Caco-2 (cell line): ENCODE measurements at regions of chr11 and their contacts with region 1.

Region 1: GRCh38 chr11:75241036-75241905 is 697 bp downstream of the TPBGL start:
- DNase-seq: peak; percentile 88 to 99
- H3K4me3 ChIP-seq: peak overlapping the region; percentile 47
- H3K4me3 Mint-ChIP-seq: peak overlapping the region; percentile 62
- H3K27ac Mint-ChIP-seq: no peak overlapping the region
- H3K4me1 ChIP-seq: peaks cover 10% of the 10 kb centered on the region; the same call in 1 of the 2 replicates
- H3K4me1 Mint-ChIP-seq: no peaks in the 10 kb centered on the region
- H3K27me3 ChIP-seq: peaks cover 6% of the 10 kb centered on the region
- H3K27me3 Mint-ChIP-seq: peaks cover 30% of the 10 kb centered on the region
- CTCF ChIP-seq: peak; percentile 67 to 99

Region 2: DNA sequence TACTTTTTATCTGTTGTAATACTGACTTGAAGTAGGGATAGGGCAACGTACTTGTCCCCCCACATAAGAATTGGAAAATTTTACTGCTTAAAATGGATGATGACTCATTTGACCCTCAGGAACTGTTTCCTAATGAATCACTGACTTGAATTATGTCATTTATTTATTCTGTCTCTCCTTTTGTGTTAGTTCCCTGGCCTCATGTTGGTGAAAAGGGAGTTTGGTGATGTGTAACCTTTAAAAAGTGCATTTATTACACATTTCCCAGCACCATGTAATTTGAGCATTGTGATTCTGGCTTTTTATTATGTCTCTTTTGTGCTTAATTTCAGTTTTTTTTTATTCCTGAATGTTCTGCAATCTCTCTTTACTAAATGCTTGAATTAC is 822.8 kb before region 1 on chr11:
- CTCF ChIA-PET with region 1: no interaction called
- POLR2A ChIA-PET with region 1: no interaction called
- intact Hi-C with region 1: no loop called
- DNase-seq: no peak
- H3K4me3 ChIP-seq: no peak overlapping the region
- H3K4me3 Mint-ChIP-seq: no peak overlapping the region
- H3K27ac Mint-ChIP-seq: no peak overlapping the region
- H3K4me1 ChIP-seq: peaks cover 22% of the 10 kb centered on the region
- H3K4me1 Mint-ChIP-seq: peaks cover 7% of the 10 kb centered on the region
- H3K27me3 ChIP-seq: no peaks in the 10 kb centered on the region
- H3K27me3 Mint-ChIP-seq: peaks cover 3% of the 10 kb centered on the region
- CTCF ChIP-seq: no peak

Region 3: DNA sequence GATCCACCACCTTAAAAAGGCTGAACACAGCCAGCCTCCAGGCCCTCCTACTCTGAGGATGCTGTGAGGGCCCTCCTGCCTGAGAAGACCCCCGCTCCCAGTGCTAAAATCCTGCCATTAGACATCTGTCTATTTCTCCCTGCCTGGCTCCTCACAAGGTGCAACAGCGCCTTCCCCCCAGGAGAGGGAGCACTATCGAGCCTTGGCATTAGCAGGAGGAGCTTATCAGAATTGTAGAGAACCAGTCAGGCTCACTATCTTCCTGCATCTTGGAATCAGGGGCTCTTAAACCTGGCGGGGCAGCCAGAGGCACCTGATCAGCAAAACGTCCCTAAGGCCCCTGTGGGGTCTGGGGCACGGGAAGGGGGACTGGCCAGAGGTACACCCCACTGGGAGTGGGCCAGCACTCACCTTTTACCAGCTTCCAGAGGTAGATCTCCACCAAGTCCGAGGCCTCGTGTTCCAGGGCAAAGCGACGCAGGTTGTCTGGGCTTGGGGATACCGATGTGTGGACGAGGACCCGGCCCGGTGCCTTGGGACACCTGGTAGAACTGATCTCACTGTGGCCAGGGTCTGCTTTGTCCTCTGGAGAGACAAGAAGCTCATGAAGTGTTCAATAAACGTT is 538.8 kb before region 1 on chr11:
- CTCF ChIA-PET with region 1: no interaction called
- POLR2A ChIA-PET with region 1: no interaction called
- intact Hi-C with region 1: loop called (anchors 10 kb)
- DNase-seq: peak; percentile 85 to 89
- H3K4me3 ChIP-seq: no peak overlapping the region
- H3K4me3 Mint-ChIP-seq: no peak overlapping the region
- H3K27ac Mint-ChIP-seq: no peak overlapping the region
- H3K4me1 ChIP-seq: no peaks in the 10 kb centered on the region
- H3K4me1 Mint-ChIP-seq: no peaks in the 10 kb centered on the region
- H3K27me3 ChIP-seq: no peaks in the 10 kb centered on the region
- H3K27me3 Mint-ChIP-seq: no peaks in the 10 kb centered on the region
- CTCF ChIP-seq: peak; percentile 99 to 100

Region 4: DNA sequence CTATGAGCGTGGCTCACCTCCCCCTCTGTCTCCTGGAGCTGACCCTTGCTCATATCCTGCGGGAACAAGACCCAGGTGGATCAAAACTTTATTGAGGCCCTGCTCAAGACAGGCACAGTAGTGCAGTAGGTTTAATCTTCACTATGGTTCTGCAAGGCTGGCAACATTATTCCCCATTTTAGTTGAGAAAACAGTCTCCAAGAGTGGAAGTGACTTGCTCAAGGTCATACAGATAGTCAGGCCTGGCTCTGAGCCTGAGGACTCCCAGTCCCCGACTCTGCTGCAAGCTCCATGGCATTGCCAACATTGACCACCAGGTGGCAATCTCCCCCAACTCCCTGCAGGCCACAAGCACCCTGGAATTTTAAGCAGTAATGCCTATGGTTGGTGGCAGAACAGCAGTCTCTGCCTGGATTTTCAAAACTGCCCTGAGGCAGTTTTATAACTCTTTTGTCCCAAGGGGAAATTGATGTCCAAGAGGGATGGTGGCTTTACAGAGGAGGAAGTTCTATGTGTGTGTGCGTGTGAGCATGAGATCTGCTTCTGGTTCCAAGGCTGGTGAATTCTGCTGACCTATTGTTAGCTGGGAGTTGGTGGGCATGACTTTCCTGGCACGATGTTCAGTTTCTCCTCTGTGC is 218.4 kb before region 1 on chr11:
- CTCF ChIA-PET with region 1: interaction called, 28 read pairs
- POLR2A ChIA-PET with region 1: no interaction called
- intact Hi-C with region 1: no loop called
- DNase-seq: peak; percentile 89 to 93
- H3K4me3 ChIP-seq: no peak overlapping the region
- H3K4me3 Mint-ChIP-seq: no peak overlapping the region
- H3K27ac Mint-ChIP-seq: no peak overlapping the region
- H3K4me1 ChIP-seq: no peaks in the 10 kb centered on the region
- H3K4me1 Mint-ChIP-seq: no peaks in the 10 kb centered on the region
- H3K27me3 ChIP-seq: no peaks in the 10 kb centered on the region
- H3K27me3 Mint-ChIP-seq: no peaks in the 10 kb centered on the region
- CTCF ChIP-seq: peak; percentile 99 to 100

Region 5: DNA sequence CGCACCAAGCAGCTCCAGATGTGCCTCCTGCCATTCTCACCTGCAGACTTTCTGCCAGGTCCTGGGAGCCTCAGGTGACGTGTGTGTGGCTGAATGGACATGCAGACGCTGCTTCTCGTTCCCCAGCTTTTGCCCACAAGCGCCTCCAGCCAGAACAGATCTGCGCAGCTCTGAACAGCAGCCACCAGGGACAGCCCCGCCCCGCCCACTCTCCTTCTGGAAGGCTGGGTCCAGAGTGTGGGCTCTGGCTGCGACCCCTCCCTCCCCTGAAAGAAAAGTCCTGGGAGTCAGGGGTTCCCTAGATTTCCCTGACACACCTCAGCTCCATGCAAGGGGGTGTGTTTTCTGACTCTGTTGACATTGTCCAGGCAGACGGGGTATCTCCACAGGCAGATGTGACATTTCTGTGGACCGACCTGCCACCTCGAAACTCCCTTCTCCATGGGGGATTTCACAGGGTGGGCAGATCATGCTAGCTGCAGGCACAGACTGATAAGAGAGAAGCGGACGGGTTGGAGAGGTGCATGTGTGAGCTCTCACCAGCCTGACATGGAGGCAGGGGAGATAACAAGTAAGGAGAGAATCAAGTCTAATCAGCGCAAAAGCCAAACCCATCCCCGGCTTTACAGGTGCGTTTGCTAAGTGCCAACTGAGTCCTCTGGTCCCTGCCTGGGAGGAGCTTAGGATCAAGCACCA is 70.6 kb before region 1 on chr11:
- CTCF ChIA-PET with region 1: interaction called, 13 read pairs
- POLR2A ChIA-PET with region 1: no interaction called
- intact Hi-C with region 1: no loop called
- DNase-seq: peak in 1 of 2 experiments; percentile 50
- H3K4me3 ChIP-seq: no peak overlapping the region
- H3K4me3 Mint-ChIP-seq: no peak overlapping the region
- H3K27ac Mint-ChIP-seq: peak overlapping the region; percentile 94
- H3K4me1 ChIP-seq: peaks cover 60% of the 10 kb centered on the region
- H3K4me1 Mint-ChIP-seq: peaks cover 61% of the 10 kb centered on the region
- H3K27me3 ChIP-seq: no peaks in the 10 kb centered on the region
- H3K27me3 Mint-ChIP-seq: no peaks in the 10 kb centered on the region
- CTCF ChIP-seq: no peak

Region 6: DNA sequence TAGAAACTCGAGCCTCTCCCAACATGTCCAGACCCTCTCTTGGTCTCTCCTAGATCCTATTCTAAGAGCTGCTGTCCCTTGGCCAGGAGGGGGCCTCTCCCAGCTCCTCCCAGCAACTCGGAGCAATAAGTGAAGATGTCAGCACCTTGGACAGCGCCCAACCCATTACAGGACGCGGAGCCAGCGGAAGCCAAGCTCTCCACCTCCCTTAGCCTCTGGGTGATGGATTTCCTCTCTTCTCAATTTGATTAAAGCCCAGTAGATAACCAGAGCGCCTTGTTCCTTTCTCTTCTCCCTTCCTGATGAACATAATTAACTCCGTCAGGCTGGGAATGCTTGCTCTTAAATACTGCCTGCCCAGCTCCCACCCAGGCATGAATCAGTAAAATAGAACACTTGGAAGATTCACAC is 26.9 kb before region 1 on chr11:
- CTCF ChIA-PET with region 1: interaction called, 36 read pairs
- POLR2A ChIA-PET with region 1: interaction called, 3 read pairs
- intact Hi-C with region 1: loop called (anchors 1 kb)
- DNase-seq: peak; percentile 95 to 97
- H3K4me3 ChIP-seq: no peak overlapping the region
- H3K4me3 Mint-ChIP-seq: no peak overlapping the region
- H3K27ac Mint-ChIP-seq: no peak overlapping the region
- H3K4me1 ChIP-seq: no peaks in the 10 kb centered on the region
- H3K4me1 Mint-ChIP-seq: no peaks in the 10 kb centered on the region
- H3K27me3 ChIP-seq: no peaks in the 10 kb centered on the region
- H3K27me3 Mint-ChIP-seq: peaks cover 23% of the 10 kb centered on the region
- CTCF ChIP-seq: peak; percentile 78 to 95

Region 7: DNA sequence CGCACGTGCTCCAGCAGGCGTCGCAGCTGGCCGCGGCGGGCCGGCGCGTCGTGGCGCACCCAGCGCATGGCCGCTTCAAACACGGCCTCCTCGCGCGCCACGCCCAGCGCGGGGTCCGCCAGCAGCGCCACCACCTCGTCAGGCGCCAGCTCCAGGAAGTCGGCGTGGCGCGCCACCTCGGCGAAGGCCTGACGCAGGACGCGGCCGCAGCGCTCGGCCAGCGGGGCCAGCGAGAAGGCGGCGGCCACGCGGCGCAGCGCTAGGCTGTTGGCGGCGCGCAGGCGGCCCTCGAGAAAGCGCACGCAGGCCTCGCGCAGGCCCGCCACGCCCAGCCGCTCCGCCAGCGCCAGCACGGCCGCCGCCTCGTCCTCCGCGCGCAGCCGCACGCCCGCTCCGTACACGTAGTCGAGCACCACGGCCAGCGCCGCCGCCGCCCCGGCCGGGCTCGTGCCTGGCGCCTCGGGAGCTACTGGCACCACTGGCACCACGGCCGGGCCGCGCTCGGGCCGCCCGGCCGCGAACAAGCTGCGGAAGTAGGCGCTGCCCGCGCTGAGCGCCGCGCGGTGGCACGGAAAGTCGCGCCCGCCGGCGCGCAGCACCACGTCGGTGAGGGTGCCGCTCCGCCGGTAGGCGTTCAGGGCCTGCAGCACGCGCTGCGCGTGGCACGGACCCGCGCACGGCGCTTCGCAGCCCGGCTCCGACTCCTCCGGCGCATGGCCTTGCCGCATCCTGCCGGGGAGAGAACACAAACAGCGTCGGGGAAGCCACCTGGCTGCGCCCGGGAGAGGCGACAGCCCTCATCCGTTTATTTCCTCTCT is 188.8 kb after region 1 on chr11:
- CTCF ChIA-PET with region 1: no interaction called
- POLR2A ChIA-PET with region 1: no interaction called
- intact Hi-C with region 1: loop called (anchors 1 kb)
- DNase-seq: peak; percentile 95 to 98
- H3K4me3 ChIP-seq: peak overlapping the region; percentile 71
- H3K4me3 Mint-ChIP-seq: peak overlapping the region; percentile 84
- H3K27ac Mint-ChIP-seq: peak overlapping the region; percentile 90
- H3K4me1 ChIP-seq: peaks cover 14% of the 10 kb centered on the region
- H3K4me1 Mint-ChIP-seq: peaks cover 9% of the 10 kb centered on the region
- H3K27me3 ChIP-seq: no peaks in the 10 kb centered on the region
- H3K27me3 Mint-ChIP-seq: no peaks in the 10 kb centered on the region
- CTCF ChIP-seq: peak in 1 of 2 experiments; percentile 20